CD14-positive monocyte (primary cell): ENCODE measurements at regions of chr12 and their contacts with region 1.

Region 1: DNA sequence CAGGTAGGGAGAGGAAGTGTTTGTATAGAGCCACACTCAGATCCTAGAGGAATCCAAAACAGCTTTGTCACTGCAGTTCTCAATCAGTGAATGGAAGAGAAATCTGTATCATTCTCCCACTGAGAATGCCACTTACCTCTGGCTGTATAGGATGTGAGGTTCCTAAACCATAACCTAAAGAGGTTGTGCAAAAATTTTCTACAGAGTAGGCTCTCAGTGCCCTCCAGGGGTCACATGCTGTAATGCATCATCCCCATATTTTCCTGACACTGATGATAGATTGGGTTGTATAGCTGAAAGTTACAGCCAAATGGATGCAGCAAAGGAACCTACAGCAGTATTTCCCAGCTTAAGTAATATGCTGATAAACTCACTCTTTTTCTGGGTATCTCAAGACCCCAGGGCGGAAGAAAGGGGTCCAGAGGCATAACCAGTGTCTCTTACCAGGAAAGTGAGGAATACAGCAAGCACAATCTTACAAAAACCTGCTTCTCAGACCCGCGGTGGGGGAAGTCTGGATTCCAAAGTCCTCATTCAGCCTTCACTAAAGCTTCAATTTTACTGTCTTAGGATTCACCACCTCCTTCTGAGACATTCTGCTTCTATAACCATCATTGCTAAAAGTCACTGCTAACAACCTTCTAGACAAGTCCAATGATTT is 3.8 kb downstream of the BCDIN3D start:
- DNase-seq: peak; percentile 41 to 72 (median 61)
- H3K4me3 ChIP-seq: no peak overlapping the region
- H3K4me3 Mint-ChIP-seq: no peak overlapping the region
- H3K27ac ChIP-seq: no peak overlapping the region
- H3K27ac Mint-ChIP-seq: peak overlapping the region in 1 of 7 donors; percentile 74
- H3K4me1 ChIP-seq: peaks cover 17 to 25% of the 10 kb centered on the region in 2 donors
- H3K4me1 Mint-ChIP-seq: peaks cover 25% of the 10 kb centered on the region
- H3K27me3 ChIP-seq: no peaks in the 10 kb centered on the region
- H3K27me3 Mint-ChIP-seq: no peaks in the 10 kb centered on the region
- CTCF ChIP-seq: peak; percentile 92

Region 2: DNA sequence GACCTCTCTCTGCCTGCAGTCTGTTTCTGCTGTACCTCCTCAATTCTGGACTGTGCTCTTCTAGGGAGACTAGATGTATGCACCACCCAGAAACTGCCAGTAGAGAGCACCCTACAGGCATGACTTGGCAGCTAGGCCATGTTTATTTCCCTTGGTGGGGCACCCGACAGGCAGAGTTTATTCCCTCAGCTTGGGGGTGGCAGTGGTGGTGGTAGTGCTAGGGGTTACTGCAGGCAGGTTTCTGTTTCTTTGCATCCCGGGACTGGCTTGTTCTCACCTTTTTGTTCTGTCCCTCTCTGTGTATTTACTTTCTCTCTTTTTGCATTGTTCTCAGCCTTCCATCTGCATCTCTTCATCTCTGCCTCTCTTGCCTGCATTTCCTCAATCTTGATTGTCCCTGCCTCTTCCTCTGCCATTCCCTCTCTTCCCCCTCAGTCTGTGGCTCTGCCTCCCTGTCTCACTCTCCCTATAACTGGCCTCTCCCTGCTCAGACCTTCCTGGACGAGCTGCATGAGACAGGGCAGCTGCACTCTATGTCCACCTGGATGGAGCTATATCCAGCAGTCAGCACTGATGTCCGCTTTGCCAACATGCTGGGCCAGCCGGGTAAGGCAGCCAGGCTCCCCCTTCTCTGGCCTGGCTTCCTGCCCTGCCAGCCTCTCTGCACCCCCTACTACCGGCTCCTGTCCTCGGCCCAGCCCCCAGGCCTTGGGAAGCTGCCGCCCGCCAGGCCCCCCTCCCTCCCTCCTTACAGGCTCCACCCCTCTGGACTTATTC is 201.9 kb before region 1 on chr12:
- intact Hi-C with region 1: loop called in 1 of 2 experiments (anchors 10 kb)
- DNase-seq: peak; percentile 18 to 49 (median 44)
- H3K4me3 ChIP-seq: no peak overlapping the region
- H3K4me3 Mint-ChIP-seq: no peak overlapping the region
- H3K27ac ChIP-seq: no peak overlapping the region
- H3K27ac Mint-ChIP-seq: peak overlapping the region in 1 of 7 donors; percentile 43
- H3K4me1 ChIP-seq: no peaks in the 10 kb centered on the region
- H3K4me1 Mint-ChIP-seq: peaks cover 7% of the 10 kb centered on the region
- H3K27me3 ChIP-seq: no peaks in the 10 kb centered on the region
- H3K27me3 Mint-ChIP-seq: peaks cover 2 to 3% (median 3%) of the 10 kb centered on the region in 3 donors
- CTCF ChIP-seq: peak; percentile 66

Region 3: DNA sequence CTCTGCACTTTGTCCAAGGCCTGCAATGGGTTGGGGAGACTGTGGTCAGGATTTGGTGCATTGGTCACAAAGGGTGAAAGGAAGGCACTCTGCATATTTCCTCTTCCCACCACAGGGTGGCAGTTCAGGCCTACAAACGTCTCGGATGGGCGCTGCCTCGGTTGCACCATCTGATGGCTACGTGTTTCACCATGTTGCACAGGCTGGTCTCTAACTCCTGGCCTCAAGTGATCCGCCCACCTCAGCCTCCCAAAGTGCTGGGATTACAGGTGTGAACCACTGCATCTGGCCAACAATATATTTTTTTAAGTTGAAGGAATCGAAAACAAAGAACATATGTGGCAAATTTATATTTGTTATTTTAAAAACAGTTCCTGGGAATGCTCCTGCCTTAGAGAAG is 62.7 kb before region 1 on chr12:
- intact Hi-C with region 1: loop called (anchors 2 to 5 kb)
- DNase-seq: peak; percentile 68 to 87 (median 84)
- H3K4me3 ChIP-seq: no peak overlapping the region
- H3K4me3 Mint-ChIP-seq: peak overlapping the region in 1 of 2 donors; percentile 77
- H3K27ac ChIP-seq: no peak overlapping the region
- H3K27ac Mint-ChIP-seq: peak overlapping the region in 1 of 7 donors; percentile 12
- H3K4me1 ChIP-seq: peaks cover 4 to 10% of the 10 kb centered on the region in 2 donors
- H3K4me1 Mint-ChIP-seq: peaks cover 18% of the 10 kb centered on the region
- H3K27me3 ChIP-seq: no peaks in the 10 kb centered on the region
- H3K27me3 Mint-ChIP-seq: peaks cover 7 to 8% (median 8%) of the 10 kb centered on the region in 3 donors
- CTCF ChIP-seq: peak; percentile 87

Region 4: GRCh38 chr12:50006789-50007436 is 167.8 kb after region 1 on chr12:
- intact Hi-C with region 1: no loop called
- DNase-seq: no peak
- H3K4me3 ChIP-seq: no peak overlapping the region
- H3K4me3 Mint-ChIP-seq: no peak overlapping the region
- H3K27ac ChIP-seq: peak overlapping the region in 1 of 2 donors; percentile 34
- H3K27ac Mint-ChIP-seq: no peak overlapping the region
- H3K4me1 ChIP-seq: no peaks in the 10 kb centered on the region
- H3K4me1 Mint-ChIP-seq: peaks cover 3% of the 10 kb centered on the region
- H3K27me3 ChIP-seq: no peaks in the 10 kb centered on the region
- H3K27me3 Mint-ChIP-seq: no peaks in the 10 kb centered on the region
- CTCF ChIP-seq: no peak